ENCODE measurements at regions of chr1 and their contacts with region 1.

Region 1: GRCh38 chr1:160284782-160285344 is at the start of gene PEX19:
- DNase-seq: peak; percentile 94
- total RNA-seq, gene PEX19: 49.8 and 50.0 TPM in 2 replicates

Region 2: DNA sequence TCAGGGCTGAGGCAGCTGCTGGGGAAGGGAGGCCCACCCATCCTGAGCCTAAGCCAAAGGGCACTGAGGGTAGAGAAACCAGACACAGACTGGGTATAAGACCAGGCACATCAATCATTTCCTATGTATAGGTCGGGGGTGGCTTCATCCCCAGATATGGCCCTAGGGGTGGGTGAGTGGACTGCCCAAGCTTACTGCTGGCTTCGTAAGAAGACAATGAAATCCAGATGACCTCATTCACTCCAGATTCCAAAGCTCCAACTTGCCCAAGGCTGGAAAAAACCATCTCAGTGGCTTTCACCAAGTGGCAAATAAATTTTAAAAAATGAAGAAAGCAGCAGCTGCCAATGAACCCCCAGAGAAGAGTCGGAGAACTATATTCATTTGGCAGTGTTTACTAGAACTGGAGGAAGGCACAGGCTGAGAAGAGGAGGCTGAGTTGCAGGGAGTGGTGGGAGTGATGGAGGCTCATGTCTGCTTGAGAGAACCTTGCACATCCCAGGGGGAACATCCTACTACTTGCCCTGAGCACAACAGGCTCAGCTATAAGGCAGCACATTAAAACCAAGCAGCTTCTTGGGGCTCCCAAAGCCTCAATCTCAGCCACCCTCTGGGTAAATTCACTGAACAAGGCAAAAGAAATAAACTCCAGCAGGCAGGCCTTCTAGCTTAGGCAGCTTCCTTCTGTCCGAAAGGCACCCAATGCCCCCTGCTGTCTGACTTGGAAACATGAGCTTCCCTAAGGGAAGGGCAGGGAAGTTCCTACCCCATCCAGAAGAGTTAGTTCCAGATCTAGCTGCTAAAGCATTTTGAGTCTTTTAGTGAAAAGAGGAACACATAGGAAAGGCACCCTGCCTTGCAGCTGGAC is 65.6 kb before region 1 on chr1:
- in situ Hi-C with region 1: loop called (anchors 5 kb)
- DNase-seq: peak; percentile 73

Region 3: GRCh38 chr1:160232911-160233310 is 52.0 kb before region 1 on chr1:
- in situ Hi-C with region 1: no loop called
- DNase-seq: no peak

Region 4: DNA sequence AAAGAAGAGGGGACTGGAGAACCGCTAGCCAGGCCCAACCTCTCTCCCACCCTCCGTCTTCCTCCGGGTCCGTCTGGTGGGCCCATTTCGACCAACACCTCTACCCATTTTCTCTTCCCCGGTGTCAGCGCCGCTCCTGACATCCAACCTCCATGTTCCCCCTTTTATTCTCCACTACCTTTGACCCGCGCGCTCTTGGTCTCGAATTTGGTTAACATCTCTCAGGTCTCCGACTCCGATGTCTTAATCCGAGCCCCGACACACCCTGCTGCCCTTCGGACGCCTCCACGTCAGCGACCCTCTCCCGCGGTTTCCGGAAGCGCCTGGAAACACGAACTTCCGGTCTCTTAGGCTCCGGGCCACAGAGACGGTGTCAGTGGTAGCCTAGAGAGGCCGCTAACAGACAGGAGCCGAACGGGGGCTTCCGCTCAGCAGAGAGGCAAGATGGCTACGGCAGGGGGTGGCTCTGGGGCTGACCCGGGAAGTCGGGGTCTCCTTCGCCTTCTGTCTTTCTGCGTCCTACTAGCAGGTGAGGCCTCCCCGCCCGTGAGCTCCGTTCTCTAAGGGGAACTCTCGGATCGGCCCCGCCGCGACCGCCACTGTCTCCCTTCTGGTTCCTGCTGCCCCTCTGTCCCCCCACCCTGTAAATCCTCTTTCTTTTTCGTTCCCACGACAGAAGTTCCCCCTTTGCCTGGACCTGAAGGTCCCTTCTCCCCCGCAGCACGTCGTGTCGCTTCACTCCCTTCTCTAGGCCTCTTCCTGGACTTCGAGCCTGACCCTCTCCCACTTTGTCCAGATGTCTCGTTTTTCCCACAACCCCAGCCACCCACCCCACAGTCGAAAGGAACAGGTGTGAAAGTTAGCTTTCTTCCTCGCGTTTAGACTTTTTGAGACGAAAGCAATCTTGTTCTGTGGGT is 58.3 kb after region 1 on chr1 and contains the starts of genes COPA and NCSTN:
- in situ Hi-C with region 1: no loop called
- DNase-seq: peak; percentile 94
- total RNA-seq, gene COPA: 73.2 and 73.6 TPM in 2 replicates
- total RNA-seq, gene NCSTN: 35.2 and 47.6 TPM in 2 replicates